ENCODE measurements at regions of chr17 and their contacts with region 1.

Region 1: GRCh38 chr17:4796553-4796921 is 573 bp downstream of the PSMB6 start:
- DNase-seq: no peak
- H3K4me3 ChIP-seq: peak overlapping the region; percentile 55 to 96 (median 93)
- H3K4me3 Mint-ChIP-seq: peak overlapping the region; percentile 98
- H3K27ac ChIP-seq: peak overlapping the region; percentile 63 to 89
- H3K27ac Mint-ChIP-seq: peak overlapping the region; percentile 89 to 97 (median 96)
- H3K4me1 ChIP-seq: peaks cover 15 to 17% of the 10 kb centered on the region in 2 donors
- H3K4me1 Mint-ChIP-seq: peaks cover 16% of the 10 kb centered on the region
- H3K27me3 ChIP-seq: peaks cover 0 to 5% of the 10 kb centered on the region in 2 donors
- H3K27me3 Mint-ChIP-seq: peaks cover 10 to 20% (median 18%) of the 10 kb centered on the region in 3 donors
- CTCF ChIP-seq: no peak

Region 2: DNA sequence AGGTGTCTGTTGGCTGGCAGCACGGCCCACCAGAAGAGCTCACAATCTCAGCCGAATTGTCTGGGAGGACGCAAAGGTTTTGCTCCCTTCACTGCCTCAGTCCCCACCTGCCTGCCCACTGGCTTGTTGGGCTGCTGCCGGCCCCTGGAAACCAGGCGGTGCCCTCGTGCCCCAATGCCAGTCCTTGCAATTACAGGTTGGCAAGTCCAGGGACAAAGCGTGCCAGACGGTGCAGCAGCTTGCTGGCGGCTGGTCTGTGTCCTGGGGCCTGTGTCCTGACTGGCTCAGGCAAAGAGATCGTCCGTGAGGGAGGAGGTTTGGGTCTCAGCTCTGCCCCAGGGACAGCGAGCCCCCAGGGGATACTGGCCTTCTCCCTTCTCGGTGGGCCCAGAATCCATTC is 322.4 kb before region 1 on chr17:
- intact Hi-C with region 1: no loop called
- DNase-seq: no peak
- H3K4me3 ChIP-seq: no peak overlapping the region
- H3K4me3 Mint-ChIP-seq: no peak overlapping the region
- H3K27ac ChIP-seq: no peak overlapping the region
- H3K27ac Mint-ChIP-seq: no peak overlapping the region
- H3K4me1 ChIP-seq: no peaks in the 10 kb centered on the region
- H3K4me1 Mint-ChIP-seq: peaks cover 3% of the 10 kb centered on the region
- H3K27me3 ChIP-seq: no peaks in the 10 kb centered on the region
- H3K27me3 Mint-ChIP-seq: peaks cover 1 to 4% (median 2%) of the 10 kb centered on the region in 3 donors
- CTCF ChIP-seq: no peak

Region 3: GRCh38 chr17:4709794-4710692 is 86.5 kb before region 1 on chr17 and contains the start of gene ARRB2:
- intact Hi-C with region 1: loop called (anchors 5 kb)
- DNase-seq: peak; percentile 97 to 99 (median 98)
- H3K4me3 ChIP-seq: peak within 1 kb of the TSS; percentile 74 to 99 (median 93)
- H3K4me3 Mint-ChIP-seq: peak within 1 kb of the TSS; percentile 97 to 98
- H3K27ac ChIP-seq: peak within 1 kb of the TSS; percentile 93 to 98
- H3K27ac Mint-ChIP-seq: peak within 1 kb of the TSS; percentile 97 to 99 (median 99)
- H3K4me1 ChIP-seq: peaks cover 44 to 50% of the 10 kb centered on the region in 2 donors
- H3K4me1 Mint-ChIP-seq: peaks cover 46% of the 10 kb centered on the region
- H3K27me3 ChIP-seq: no peaks in the 10 kb centered on the region
- H3K27me3 Mint-ChIP-seq: peaks cover 0 to 4% (median 0%) of the 10 kb centered on the region in 3 donors
- CTCF ChIP-seq: peak; percentile 82
- polyA plus RNA-seq, gene ARRB2: 134 to 760 (median 150) TPM

Region 4: GRCh38 chr17:4733073-4733531 is 63.4 kb before region 1 on chr17:
- intact Hi-C with region 1: loop called (anchors 2 to 5 kb)
- DNase-seq: peak; percentile 90 to 95 (median 91)
- H3K4me3 ChIP-seq: peak overlapping the region in 1 of 3 experiments; percentile 80
- H3K4me3 Mint-ChIP-seq: peak overlapping the region; percentile 26 to 45
- H3K27ac ChIP-seq: peak overlapping the region; percentile 90 to 96
- H3K27ac Mint-ChIP-seq: peak overlapping the region; percentile 97 to 99 (median 99)
- H3K4me1 ChIP-seq: peaks cover 68 to 78% of the 10 kb centered on the region in 2 donors
- H3K4me1 Mint-ChIP-seq: peaks cover 74% of the 10 kb centered on the region
- H3K27me3 ChIP-seq: peaks cover 0 to 5% of the 10 kb centered on the region in 2 donors
- H3K27me3 Mint-ChIP-seq: peaks cover 3 to 16% (median 9%) of the 10 kb centered on the region in 3 donors
- CTCF ChIP-seq: peak; percentile 85

Region 5: DNA sequence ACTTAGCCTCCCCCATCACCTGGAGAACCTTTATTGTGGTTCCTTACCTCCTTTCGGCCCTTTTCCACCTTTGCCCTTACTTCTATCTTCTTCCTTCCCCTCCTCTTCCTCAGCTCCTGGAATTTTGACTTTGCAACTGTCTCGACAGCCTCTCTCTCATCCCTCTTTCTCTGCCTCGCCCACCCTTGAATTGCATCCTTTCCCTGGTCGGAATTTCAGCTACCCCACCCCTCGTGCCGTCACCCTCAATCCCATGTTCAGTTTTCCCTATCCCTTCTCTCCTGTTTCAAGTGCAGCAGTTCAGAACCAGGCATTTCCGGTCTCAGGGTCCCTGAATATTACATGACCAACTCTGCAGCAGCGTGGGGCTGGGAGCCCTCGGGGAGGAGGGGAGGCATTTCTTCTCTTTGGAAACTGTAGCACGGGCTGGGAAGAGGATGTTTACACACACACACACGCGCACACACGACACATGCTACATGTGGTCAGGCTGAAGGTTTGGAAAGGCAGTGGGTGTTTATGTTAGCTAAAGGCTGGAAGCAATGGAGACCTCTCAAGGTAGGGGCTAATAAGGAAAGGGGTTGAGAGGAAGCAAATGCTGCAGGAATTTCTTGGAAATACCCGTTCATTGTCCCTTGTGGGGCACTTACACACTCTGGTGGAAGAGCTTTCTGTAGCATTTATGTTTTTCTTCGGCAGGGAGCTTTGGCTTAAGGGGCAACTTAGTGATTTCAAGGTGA is 37.6 kb after region 1 on chr17:
- intact Hi-C with region 1: loop called in 1 of 2 experiments (anchors 5 kb)
- DNase-seq: peak in 1 of 3 donors; percentile 21
- H3K4me3 ChIP-seq: peak overlapping the region; percentile 78 to 95 (median 94)
- H3K4me3 Mint-ChIP-seq: peak overlapping the region; percentile 97 to 99
- H3K27ac ChIP-seq: peak overlapping the region; percentile 38 to 88
- H3K27ac Mint-ChIP-seq: peak overlapping the region; percentile 70 to 94 (median 88)
- H3K4me1 ChIP-seq: peaks cover 25 to 32% of the 10 kb centered on the region in 2 donors
- H3K4me1 Mint-ChIP-seq: peaks cover 35% of the 10 kb centered on the region
- H3K27me3 ChIP-seq: no peaks in the 10 kb centered on the region
- H3K27me3 Mint-ChIP-seq: peaks cover 5 to 6% (median 5%) of the 10 kb centered on the region in 3 donors
- CTCF ChIP-seq: no peak

Region 6: GRCh38 chr17:4891411-4892342 is 95.1 kb after region 1 on chr17:
- intact Hi-C with region 1: loop called in 1 of 2 experiments (anchors 2 kb)
- DNase-seq: peak in 1 of 3 donors; percentile 3
- H3K4me3 ChIP-seq: no peak overlapping the region
- H3K4me3 Mint-ChIP-seq: no peak overlapping the region
- H3K27ac ChIP-seq: no peak overlapping the region
- H3K27ac Mint-ChIP-seq: peak overlapping the region in 1 of 7 donors; percentile 66
- H3K4me1 ChIP-seq: no peaks in the 10 kb centered on the region
- H3K4me1 Mint-ChIP-seq: peaks cover 2% of the 10 kb centered on the region
- H3K27me3 ChIP-seq: no peaks in the 10 kb centered on the region
- H3K27me3 Mint-ChIP-seq: peaks cover 0 to 3% (median 0%) of the 10 kb centered on the region in 3 donors
- CTCF ChIP-seq: no peak

Region 7: GRCh38 chr17:5468075-5468473 is 671.5 kb after region 1 on chr17:
- intact Hi-C with region 1: no loop called
- DNase-seq: no peak
- H3K4me3 ChIP-seq: peak overlapping the region; percentile 67 to 94 (median 85)
- H3K4me3 Mint-ChIP-seq: peak overlapping the region; percentile 91 to 95
- H3K27ac ChIP-seq: peak overlapping the region in 1 of 2 donors; percentile 60
- H3K27ac Mint-ChIP-seq: peak overlapping the region; percentile 1 to 79 (median 53)
- H3K4me1 ChIP-seq: peaks cover 27 to 30% of the 10 kb centered on the region in 2 donors
- H3K4me1 Mint-ChIP-seq: peaks cover 45% of the 10 kb centered on the region
- H3K27me3 ChIP-seq: no peaks in the 10 kb centered on the region
- H3K27me3 Mint-ChIP-seq: no peaks in the 10 kb centered on the region
- CTCF ChIP-seq: no peak

Measured in CD14-positive monocyte (primary cell).